ENCODE measurements at regions of chr1 and their contacts with region 1.

Region 1: GRCh38 chr1:202692959-202693555 is 17.2 kb downstream of the SYT2 start:
- DNase-seq: peak; percentile 76 to 91 (median 86)
- H3K4me3 ChIP-seq: no peak overlapping the region
- H3K27ac ChIP-seq: no peak overlapping the region
- H3K4me1 ChIP-seq: peaks cover 0 to under 1% (median under 1%) of the 10 kb centered on the region in 4 experiments
- H3K27me3 ChIP-seq: peaks cover 4 to 75% (median 17%) of the 10 kb centered on the region in 5 experiments

Region 2: GRCh38 chr1:202576816-202577215 is 116.2 kb before region 1 on chr1:
- CTCF ChIA-PET with region 1: no interaction called
- POLR2A ChIA-PET with region 1: no interaction called
- DNase-seq: no peak
- H3K4me3 ChIP-seq: no peak overlapping the region
- H3K27ac ChIP-seq: no peak overlapping the region
- H3K4me1 ChIP-seq: no peaks in the 10 kb centered on the region
- H3K27me3 ChIP-seq: no peaks in the 10 kb centered on the region

Region 3: DNA sequence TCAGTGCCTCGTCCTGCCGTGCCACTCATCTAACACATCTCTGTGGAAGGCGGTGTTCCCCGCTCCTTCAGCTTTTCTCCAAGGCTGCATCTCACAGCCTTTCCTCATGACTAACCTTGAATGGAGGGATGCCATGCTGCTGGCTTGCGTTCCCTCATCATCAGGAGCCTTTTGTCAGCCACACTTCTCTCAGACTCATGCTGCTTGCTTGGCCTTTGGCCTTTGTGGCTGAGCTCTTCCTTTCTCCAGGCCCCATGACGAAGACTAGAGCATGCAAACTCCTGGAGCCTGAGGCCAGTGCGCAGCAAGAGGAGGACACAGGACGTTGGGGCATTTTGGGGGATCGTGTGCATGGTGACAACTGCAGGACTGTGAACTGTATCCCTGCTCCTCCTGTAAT is 53.6 kb before region 1 on chr1:
- CTCF ChIA-PET with region 1: no interaction called
- POLR2A ChIA-PET with region 1: no interaction called
- DNase-seq: no peak
- H3K4me3 ChIP-seq: no peak overlapping the region
- H3K27ac ChIP-seq: no peak overlapping the region
- H3K4me1 ChIP-seq: peaks cover 0 to 19% (median 10%) of the 10 kb centered on the region in 4 experiments
- H3K27me3 ChIP-seq: peaks cover 6 to 80% (median 28%) of the 10 kb centered on the region in 5 experiments

Region 4: DNA sequence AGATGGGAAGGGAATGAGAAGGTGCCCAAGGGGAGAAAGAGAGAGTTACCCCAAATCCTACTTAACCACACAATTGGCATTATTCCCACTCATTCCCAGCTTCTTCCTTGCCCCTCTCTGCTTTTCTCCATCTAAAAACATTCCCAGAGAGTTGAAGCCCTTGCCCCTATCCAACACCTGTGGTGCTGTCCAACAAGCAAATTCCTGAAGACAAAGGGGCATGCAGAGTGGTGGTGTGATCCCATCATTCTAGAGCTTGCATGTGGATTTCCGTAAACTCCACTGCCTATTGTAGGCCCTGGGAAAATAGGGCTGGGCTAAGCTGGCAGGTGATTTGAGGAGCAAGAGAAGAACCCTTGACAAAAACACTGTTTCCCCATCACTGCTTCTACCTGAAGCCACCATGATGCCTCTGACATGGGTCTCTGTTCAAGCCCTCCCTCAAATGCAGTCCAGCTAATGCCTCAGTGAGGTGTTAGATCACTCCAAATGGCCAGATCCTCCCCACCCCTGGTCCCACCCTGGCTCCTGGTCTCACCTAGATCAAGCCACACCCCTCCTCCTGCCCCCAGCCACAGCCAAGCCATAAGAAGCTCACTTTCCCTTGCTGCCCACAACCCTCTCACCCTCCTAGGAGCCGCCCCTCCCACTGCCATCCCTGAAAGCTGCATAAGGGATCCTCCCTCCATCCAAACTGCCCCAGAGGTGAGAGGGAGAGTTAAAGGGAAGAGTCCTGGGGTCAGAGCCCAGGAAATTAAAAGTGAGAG is 12.3 kb before region 1 on chr1:
- CTCF ChIA-PET with region 1: interaction called, 15 read pairs
- POLR2A ChIA-PET with region 1: no interaction called
- DNase-seq: no peak
- H3K4me3 ChIP-seq: no peak overlapping the region
- H3K27ac ChIP-seq: no peak overlapping the region
- H3K4me1 ChIP-seq: no peaks in the 10 kb centered on the region
- H3K27me3 ChIP-seq: peaks cover 0 to 55% (median 8%) of the 10 kb centered on the region in 5 experiments

Measured in common myeloid progenitor, CD34-positive (primary cell).